A673 (cell line): ENCODE measurements at regions of chr12 and their contacts with region 1.

Region 1: GRCh38 chr12:91142221-91142631 is 30.9 kb upstream of the LUM start:
- DNase-seq: no peak
- H3K4me3 ChIP-seq: no peak overlapping the region
- H3K27ac ChIP-seq: no peak overlapping the region
- H3K4me1 ChIP-seq: peaks cover 31% of the 10 kb centered on the region
- H3K27me3 ChIP-seq: no peaks in the 10 kb centered on the region
- CTCF ChIP-seq: no peak

Region 2: GRCh38 chr12:90801776-90802175 is 340.4 kb before region 1 on chr12:
- CTCF ChIA-PET with region 1: no interaction called
- POLR2A ChIA-PET with region 1: no interaction called
- intact Hi-C with region 1: no loop called
- DNase-seq: no peak
- H3K4me3 ChIP-seq: no peak overlapping the region
- H3K27ac ChIP-seq: no peak overlapping the region
- H3K4me1 ChIP-seq: no peaks in the 10 kb centered on the region
- H3K27me3 ChIP-seq: no peaks in the 10 kb centered on the region
- CTCF ChIP-seq: no peak

Region 3: DNA sequence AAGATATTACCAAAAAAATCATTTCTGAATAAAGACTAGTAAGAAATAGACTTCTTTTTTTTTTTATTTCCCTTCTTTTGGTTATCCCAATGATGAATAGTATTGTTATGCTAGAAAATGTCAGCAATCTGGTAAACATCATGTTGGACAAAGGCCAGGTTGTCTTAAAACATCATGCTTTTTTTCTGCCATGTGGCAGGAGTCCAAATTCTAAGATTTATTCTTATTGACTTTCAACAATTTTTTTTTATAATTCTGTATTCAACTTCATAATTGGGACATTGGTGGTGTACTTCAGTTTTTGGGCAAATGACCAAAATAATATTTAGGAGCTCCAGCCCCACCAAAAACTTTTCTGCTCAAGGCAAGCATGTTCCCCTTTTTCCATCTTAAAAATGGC is 29.9 kb after region 1 on chr12:
- CTCF ChIA-PET with region 1: no interaction called
- POLR2A ChIA-PET with region 1: interaction called, 13 read pairs
- intact Hi-C with region 1: no loop called
- DNase-seq: no peak
- H3K4me3 ChIP-seq: no peak overlapping the region
- H3K27ac ChIP-seq: no peak overlapping the region
- H3K4me1 ChIP-seq: no peaks in the 10 kb centered on the region
- H3K27me3 ChIP-seq: no peaks in the 10 kb centered on the region
- CTCF ChIP-seq: no peak